Activated CD8-positive, alpha-beta T cell treated with anti-CD3 and anti-CD28 coated beads for 36 hours (primary cell): ENCODE measurements at regions of chr11 and their contacts with region 1.

Region 1: GRCh38 chr11:1572197-1573076 is at the start of gene DUSP8:
- DNase-seq: peak; percentile 94
- ATAC-seq: peak; percentile 71
- H3K4me3 Mint-ChIP-seq: peak within 1 kb of the TSS; percentile 37
- H3K27ac Mint-ChIP-seq: no peak within 1 kb of the TSS
- H3K4me1 Mint-ChIP-seq: peaks cover 22% of the 10 kb centered on the region
- H3K27me3 Mint-ChIP-seq: peaks cover 2% of the 10 kb centered on the region
- CTCF ChIP-seq: no peak
- total RNA-seq, gene DUSP8: 1.4 to 2.0 TPM

Region 2: GRCh38 chr11:1202776-1203504 is 369.5 kb before region 1 on chr11:
- CTCF ChIA-PET with region 1: interaction called, 10 read pairs
- POLR2A ChIA-PET with region 1: no interaction called
- intact Hi-C with region 1: no loop called
- DNase-seq: peak; percentile 76
- ATAC-seq: peak; percentile 92
- H3K4me3 Mint-ChIP-seq: no peak overlapping the region
- H3K27ac Mint-ChIP-seq: no peak overlapping the region
- H3K4me1 Mint-ChIP-seq: no peaks in the 10 kb centered on the region
- H3K27me3 Mint-ChIP-seq: no peaks in the 10 kb centered on the region
- CTCF ChIP-seq: peak; percentile 93

Region 3: DNA sequence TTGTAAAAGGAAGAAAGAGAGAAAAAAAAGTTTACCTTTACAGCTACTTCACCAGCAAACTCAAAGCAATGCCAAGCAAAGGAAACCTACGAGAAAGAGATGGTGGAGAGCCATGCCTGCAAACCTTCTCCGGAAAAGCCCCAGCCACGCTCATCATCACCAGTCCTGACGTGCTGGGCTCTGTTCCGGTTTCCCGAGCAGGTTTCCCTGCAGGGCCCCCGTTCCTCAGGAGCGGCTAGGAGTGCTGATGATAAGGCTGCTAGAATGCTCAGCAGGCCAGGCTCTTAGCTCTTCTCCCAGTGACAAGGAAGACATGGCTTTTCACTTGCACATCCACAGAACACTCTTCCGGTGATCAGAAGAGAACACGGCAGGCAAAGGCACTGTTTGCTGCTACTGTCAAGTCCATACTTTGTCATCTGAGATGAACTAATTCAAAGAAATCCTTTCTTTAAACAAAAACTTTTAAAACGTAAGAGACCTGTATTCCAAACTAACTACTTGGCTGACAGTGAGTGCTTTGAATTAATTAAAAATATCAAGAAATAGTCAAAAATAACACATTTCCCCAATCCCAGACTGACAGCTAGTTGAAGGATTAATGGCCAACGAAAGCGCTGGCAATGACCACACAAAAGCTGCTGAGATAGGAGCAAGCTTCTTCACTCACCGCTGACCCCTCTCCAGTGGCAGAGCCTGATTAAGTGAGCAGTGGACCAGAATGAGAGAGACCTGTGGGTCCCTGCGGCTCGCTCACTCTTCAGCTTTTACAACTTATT is 36.2 kb before region 1 on chr11:
- CTCF ChIA-PET with region 1: interaction called, 10 read pairs
- POLR2A ChIA-PET with region 1: interaction called, 3 read pairs
- intact Hi-C with region 1: no loop called
- DNase-seq: no peak
- ATAC-seq: no peak
- H3K4me3 Mint-ChIP-seq: no peak overlapping the region
- H3K27ac Mint-ChIP-seq: no peak overlapping the region
- H3K4me1 Mint-ChIP-seq: peaks cover 22% of the 10 kb centered on the region
- H3K27me3 Mint-ChIP-seq: peaks cover 2% of the 10 kb centered on the region
- CTCF ChIP-seq: no peak

Region 4: DNA sequence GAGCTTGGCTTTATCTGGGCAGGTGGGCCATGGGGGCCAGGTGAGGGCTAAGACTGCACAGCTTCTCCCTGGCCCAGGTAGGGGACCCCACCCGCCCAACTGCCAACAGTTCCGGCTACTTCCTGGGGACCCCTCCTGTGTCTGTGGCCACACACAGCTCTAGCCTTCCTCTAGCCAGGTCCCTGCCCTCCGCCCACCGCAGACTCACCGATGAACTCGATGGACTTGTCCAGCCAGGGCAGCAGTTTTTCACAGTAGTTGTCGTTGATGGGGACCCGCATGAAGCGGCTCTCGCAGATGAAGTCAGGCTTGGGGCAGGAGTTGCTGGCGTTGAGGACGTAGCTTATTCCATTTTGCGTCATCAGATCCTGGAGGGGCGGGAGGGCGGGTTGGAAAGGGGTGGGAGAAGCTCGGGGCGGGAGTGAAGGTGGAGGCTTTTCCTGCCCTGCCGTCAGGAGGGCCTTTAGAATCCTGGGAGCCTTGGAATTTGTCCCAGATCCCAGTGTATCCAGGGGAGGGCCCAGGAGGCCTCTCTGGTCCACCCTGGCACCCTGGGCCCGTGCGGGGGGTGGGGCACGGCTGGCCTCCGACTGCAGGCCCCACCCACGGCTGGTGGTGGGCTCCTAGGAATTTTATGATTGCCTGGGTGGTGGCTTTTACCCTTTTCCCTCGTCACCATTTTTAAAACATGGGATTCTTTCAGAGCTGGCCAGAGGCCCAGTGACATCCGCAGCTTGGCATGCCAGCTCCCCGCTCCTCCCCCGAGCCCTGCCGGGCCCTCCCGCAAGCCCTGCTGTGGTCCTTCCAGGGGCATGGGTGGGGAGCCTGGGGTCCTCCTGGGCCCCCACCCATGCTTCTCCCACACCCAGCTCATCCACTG is 14.3 kb before region 1 on chr11:
- CTCF ChIA-PET with region 1: interaction called, 22 read pairs
- POLR2A ChIA-PET with region 1: interaction called, 5 read pairs
- intact Hi-C with region 1: no loop called
- DNase-seq: no peak
- ATAC-seq: no peak
- H3K4me3 Mint-ChIP-seq: no peak overlapping the region
- H3K27ac Mint-ChIP-seq: no peak overlapping the region
- H3K4me1 Mint-ChIP-seq: no peaks in the 10 kb centered on the region
- H3K27me3 Mint-ChIP-seq: peaks cover 2% of the 10 kb centered on the region
- CTCF ChIP-seq: no peak

Region 5: DNA sequence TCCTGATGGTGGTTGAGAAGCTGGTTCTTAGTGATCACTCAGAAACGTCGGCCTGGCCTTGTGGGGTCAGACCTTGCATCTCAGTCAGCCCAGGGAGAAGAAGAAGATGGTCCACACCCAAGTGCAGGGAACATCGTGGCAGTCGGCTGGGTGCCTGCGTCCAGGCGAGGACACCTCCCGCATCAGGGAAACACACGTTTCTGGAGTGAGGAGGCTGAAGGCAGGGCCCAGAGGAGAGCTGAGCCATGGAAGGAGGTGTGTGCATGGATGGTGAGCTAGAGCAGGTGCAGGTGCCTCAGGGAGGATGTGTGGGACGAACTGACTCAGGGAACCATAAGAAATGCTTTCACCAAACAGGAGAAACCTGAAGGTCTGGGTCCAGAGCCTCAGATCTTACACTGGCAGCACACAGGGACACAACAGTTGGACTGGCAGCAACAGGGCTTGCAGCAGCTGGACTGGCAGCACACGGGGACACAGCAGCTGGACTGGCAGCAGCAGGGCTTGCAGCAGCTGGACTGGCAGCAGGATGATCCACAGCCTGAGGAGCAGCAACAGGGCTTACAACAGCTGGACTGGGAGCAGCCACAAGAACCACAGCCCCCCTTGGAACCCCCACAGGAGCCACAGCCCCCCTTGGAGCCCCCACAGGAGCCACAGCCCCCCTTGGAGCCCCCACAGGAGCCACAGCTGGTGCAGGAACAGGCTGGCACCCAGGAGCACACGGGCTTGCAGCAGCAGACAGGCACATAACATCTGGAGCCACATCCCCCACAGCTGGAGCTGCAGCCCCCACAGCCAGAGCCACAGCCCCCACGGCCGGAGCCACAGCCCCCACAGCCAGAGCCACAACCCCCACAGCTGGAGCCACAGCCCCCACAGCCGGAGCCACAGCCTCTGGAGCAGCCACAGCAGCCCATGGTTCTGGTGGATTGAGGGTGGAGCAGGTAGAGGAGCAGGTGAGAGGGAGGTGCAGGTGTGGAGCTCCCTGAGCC is 25.2 kb after region 1 on chr11 and contains the start of gene KRTAP5-2:
- CTCF ChIA-PET with region 1: interaction called, 46 read pairs
- POLR2A ChIA-PET with region 1: no interaction called
- intact Hi-C with region 1: no loop called
- DNase-seq: no peak
- ATAC-seq: no peak
- H3K4me3 Mint-ChIP-seq: no peak within 1 kb of the TSS
- H3K27ac Mint-ChIP-seq: no peak within 1 kb of the TSS
- H3K4me1 Mint-ChIP-seq: no peaks in the 10 kb centered on the region
- H3K27me3 Mint-ChIP-seq: peaks cover 47% of the 10 kb centered on the region
- CTCF ChIP-seq: no peak
- total RNA-seq, gene KRTAP5-2: not detected